Activated CD4-positive, alpha-beta memory T cell treated with anti-CD3 and anti-CD28 coated beads for 36 hours (primary cell): ENCODE measurements at regions of chr11 and their contacts with region 1.

Region 1: DNA sequence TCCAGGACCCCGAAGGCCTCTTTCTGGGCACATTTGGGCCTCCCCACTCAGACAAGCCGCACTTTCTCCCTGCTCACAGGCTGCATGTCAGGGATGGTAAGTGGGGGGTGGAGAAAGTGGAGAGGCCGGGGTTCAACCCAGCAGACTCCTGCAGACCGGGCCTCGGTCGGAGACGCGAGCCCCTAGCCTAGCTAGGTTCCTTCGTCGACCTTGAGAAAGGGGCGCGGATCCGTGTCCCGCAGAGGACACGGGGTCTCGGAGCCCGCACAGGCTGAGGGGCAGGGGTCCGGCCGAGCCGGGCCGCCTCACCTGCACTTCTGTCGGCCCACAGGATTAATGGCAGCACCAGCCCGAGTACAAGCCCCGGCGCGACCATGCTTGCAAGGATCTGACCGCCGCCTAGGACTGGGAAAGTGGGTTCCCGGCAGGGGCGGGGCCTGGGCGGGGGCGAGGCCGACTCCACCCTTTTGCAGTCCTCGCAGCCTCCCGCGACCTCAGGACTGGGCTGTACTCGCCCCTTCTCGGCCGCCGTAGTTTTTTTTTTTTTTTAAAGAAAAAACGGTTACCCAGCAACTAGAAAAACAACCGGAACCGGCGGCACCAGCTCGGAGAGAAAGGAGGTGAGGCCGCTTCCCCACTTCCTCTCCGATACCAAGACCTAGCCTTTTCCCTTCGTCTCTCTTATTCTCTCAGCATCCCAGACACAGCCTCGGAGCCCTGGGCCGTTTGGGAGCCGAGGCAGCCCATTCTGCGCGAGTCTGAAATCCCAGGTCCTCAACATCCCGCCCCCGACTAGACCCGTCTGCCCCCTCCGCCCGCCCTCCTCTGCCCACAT is at the starts of genes SIAE and SPA17:
- DNase-seq: peak; percentile 94
- H3K4me3 Mint-ChIP-seq: peak within 1 kb of the TSS; percentile 87
- H3K27ac Mint-ChIP-seq: peak within 1 kb of the TSS; percentile 79
- H3K4me1 Mint-ChIP-seq: peaks cover 29% of the 10 kb centered on the region
- H3K27me3 Mint-ChIP-seq: no peaks in the 10 kb centered on the region
- total RNA-seq, gene SIAE: 11.8 to 12.1 TPM
- total RNA-seq, gene SPA17: 5.0 to 6.7 TPM

Region 2: DNA sequence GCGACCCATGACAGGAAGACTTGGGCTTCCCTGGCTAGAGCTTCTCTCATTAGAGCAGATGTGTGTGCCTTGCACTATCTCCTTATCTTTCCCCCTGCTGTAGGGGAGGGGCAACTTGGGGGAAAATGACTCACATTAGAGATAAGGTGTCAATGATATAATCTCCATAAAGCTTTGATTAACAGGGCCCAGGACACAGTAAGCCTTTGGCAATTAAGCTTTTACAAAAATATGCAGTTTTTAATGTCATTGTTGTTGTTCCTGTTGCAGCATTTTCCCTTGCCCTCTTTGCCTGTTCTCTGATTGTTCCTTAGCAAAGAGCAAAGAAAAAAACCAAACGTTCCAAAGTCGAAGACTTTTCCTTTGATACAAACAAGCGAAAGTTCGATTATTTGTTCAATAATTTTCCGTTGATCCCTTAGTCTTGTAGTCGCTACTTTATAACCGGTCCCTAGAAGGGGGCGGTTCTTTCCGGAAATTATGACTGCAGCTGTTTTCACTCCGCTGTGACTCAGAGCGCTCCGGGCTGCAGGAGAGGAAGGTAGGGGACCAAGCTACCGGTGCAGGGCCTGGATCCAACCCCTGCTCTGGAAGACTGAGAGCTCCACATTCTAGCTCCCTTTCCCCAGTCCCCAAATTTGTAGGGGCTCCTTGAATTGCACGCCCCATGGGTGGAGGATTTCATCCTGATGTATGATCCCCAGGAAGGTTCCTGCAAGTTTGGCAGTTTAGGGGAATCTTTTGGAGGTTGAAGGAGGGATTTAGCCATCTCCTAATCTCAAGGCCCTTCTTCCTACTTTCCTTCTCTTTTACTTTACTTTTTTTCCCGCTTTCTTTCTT is 558.4 kb before region 1 on chr11 and contains the start of gene VWA5A:
- CTCF ChIA-PET with region 1: no interaction called
- POLR2A ChIA-PET with region 1: no interaction called
- intact Hi-C with region 1: no loop called
- DNase-seq: peak; percentile 89
- H3K4me3 Mint-ChIP-seq: peak within 1 kb of the TSS; percentile 85
- H3K27ac Mint-ChIP-seq: peak within 1 kb of the TSS; percentile 76
- H3K4me1 Mint-ChIP-seq: peaks cover 15% of the 10 kb centered on the region
- H3K27me3 Mint-ChIP-seq: peaks cover 2% of the 10 kb centered on the region
- total RNA-seq, gene VWA5A: 6.9 to 7.5 TPM

Region 3: DNA sequence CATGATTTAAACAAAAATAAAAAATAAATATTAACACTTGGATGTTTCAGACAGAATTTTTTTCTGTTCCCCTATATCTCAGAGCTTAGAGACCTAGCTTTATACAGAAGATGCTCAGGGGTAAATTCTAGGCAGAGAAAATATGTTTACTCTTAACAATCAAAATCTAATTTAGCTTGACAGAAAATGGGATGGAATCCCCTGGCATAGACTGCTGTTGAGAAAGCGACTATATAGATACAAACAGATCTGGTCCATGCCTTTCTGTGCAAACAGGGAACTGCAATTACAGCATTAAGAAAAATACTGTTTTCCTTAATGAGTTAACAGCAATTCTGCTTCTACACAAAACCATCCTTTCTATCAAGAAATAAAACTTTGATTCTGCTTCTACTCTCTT is 14.6 kb before region 1 on chr11:
- CTCF ChIA-PET with region 1: interaction called, 15 read pairs
- POLR2A ChIA-PET with region 1: no interaction called
- intact Hi-C with region 1: no loop called
- DNase-seq: no peak
- H3K4me3 Mint-ChIP-seq: no peak overlapping the region
- H3K27ac Mint-ChIP-seq: no peak overlapping the region
- H3K4me1 Mint-ChIP-seq: no peaks in the 10 kb centered on the region
- H3K27me3 Mint-ChIP-seq: no peaks in the 10 kb centered on the region

Region 4: GRCh38 chr11:124746621-124747243 is 73.2 kb after region 1 on chr11:
- CTCF ChIA-PET with region 1: interaction called, 16 read pairs
- POLR2A ChIA-PET with region 1: interaction called, 9 read pairs
- intact Hi-C with region 1: loop called (anchors 1 kb)
- DNase-seq: peak; percentile 85
- H3K4me3 Mint-ChIP-seq: peak overlapping the region; percentile 87
- H3K27ac Mint-ChIP-seq: peak overlapping the region; percentile 89
- H3K4me1 Mint-ChIP-seq: peaks cover 6% of the 10 kb centered on the region
- H3K27me3 Mint-ChIP-seq: no peaks in the 10 kb centered on the region

Region 5: GRCh38 chr11:124793466-124794278 is 120.1 kb after region 1 on chr11:
- CTCF ChIA-PET with region 1: interaction called, 41 read pairs
- POLR2A ChIA-PET with region 1: interaction called, 3 read pairs
- intact Hi-C with region 1: loop called (anchors 1 kb)
- DNase-seq: peak; percentile 17
- H3K4me3 Mint-ChIP-seq: no peak overlapping the region
- H3K27ac Mint-ChIP-seq: no peak overlapping the region
- H3K4me1 Mint-ChIP-seq: peaks cover 31% of the 10 kb centered on the region
- H3K27me3 Mint-ChIP-seq: no peaks in the 10 kb centered on the region

Region 6: GRCh38 chr11:124865921-124866583 is 192.5 kb after region 1 on chr11:
- CTCF ChIA-PET with region 1: interaction called, 29 read pairs
- POLR2A ChIA-PET with region 1: no interaction called
- intact Hi-C with region 1: loop called (anchors 2 kb)
- DNase-seq: peak; percentile 68
- H3K4me3 Mint-ChIP-seq: no peak overlapping the region
- H3K27ac Mint-ChIP-seq: no peak overlapping the region
- H3K4me1 Mint-ChIP-seq: peaks cover 36% of the 10 kb centered on the region
- H3K27me3 Mint-ChIP-seq: peaks cover 77% of the 10 kb centered on the region